Heart left ventricle (tissue), 16 donors: ENCODE measurements at regions of chr11 and their contacts with region 1.

Region 1: DNA sequence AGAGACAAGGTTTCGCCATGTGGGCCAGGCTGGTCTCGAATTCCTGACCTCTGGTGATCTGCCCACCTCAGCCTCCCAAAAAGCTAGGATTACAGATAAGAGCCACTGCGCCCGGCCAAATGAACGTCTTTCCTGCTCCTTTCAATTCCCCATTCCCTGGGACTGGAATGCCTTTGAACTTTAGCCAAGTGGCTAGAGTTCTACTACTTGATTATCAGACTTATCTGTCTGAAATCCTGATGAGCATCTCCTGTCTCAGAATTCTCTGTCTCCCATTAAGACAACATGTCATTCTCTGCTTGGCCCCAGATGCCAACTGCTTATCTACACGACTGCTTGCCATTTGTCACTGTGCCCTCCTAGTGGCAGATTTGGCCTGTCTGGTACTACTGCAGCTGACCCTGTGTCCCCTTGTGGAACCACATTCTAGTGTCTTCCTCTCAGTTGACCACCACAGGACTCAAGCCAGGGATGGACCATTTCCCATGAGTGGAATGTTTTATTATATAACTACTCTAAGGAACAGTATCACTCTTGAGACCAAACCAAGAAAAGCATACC is 33.1 kb upstream of the IPO7 start:
- DNase-seq: peak in 4 of 5 donors; percentile 14 to 36 (median 28)
- ATAC-seq: peak; percentile 69 to 76 (median 71)
- H3K4me3 ChIP-seq: no peak overlapping the region
- H3K27ac ChIP-seq: no peak overlapping the region
- H3K4me1 ChIP-seq: no peaks in the 10 kb centered on the region
- H3K27me3 ChIP-seq: no peaks in the 10 kb centered on the region
- CTCF ChIP-seq: peak in 3 of 12 donors; percentile 10 to 24 (median 18)
- POLR2A ChIP-seq: no peak

Region 2: GRCh38 chr11:9320047-9320446 is 31.4 kb before region 1 on chr11:
- intact Hi-C with region 1: loop called in 1 of 10 experiments (anchors 1 kb)
- DNase-seq: no peak
- ATAC-seq: no peak
- H3K4me3 ChIP-seq: no peak overlapping the region
- H3K27ac ChIP-seq: no peak overlapping the region
- H3K4me1 ChIP-seq: peaks cover 0 to 8% (median 2%) of the 10 kb centered on the region in 12 donors
- H3K27me3 ChIP-seq: peaks cover 0 to 4% (median 0%) of the 10 kb centered on the region in 9 donors
- CTCF ChIP-seq: no peak
- POLR2A ChIP-seq: no peak